ENCODE measurements at regions of chr1 and their contacts with region 1.

Region 1: GRCh38 chr1:30919025-30919881 is 10.7 kb upstream of the SDC3 start:
- DNase-seq: no peak
- ATAC-seq: no peak
- H3K4me3 ChIP-seq: no peak overlapping the region
- H3K27ac ChIP-seq: no peak overlapping the region
- H3K4me1 ChIP-seq: no peaks in the 10 kb centered on the region
- CTCF ChIP-seq: no peak
- EP300 ChIP-seq: no peak
- POLR2A ChIP-seq: no peak
- RAD21 ChIP-seq: no peak

Region 2: DNA sequence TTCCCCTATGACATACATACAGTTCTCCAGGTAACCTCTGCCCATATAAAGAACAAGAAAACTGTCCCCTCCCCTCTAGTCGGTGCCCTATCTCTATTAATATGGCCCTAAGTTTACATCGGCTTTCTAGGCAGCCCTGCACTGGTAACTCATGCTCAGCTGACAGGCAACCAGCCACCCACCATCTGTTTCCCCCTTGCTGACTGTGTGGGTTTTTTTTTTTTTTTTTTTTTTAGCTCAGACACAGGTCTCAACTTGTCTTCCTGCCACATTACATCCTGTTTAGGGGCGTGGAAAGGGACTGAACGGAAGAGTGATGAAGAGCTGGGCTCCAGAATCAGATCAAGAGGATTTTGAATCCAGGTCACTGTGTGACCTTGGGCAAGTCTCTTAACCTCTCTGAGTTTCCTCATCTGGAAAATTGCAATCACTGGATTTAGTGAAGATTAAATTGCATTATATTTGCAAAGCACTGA is 175.6 kb before region 1 on chr1:
- CTCF ChIA-PET with region 1: no interaction called
- POLR2A ChIA-PET with region 1: no interaction called
- DNase-seq: no peak
- ATAC-seq: no peak
- H3K4me3 ChIP-seq: no peak overlapping the region
- H3K27ac ChIP-seq: no peak overlapping the region
- H3K4me1 ChIP-seq: peaks cover 7% of the 10 kb centered on the region; the same call in 2 of the 3 replicates
- CTCF ChIP-seq: no peak
- EP300 ChIP-seq: no peak
- POLR2A ChIP-seq: no peak
- RAD21 ChIP-seq: no peak

Region 3: GRCh38 chr1:30929135-30929889 is 10.1 kb after region 1 on chr1:
- CTCF ChIA-PET with region 1: interaction called, 19 read pairs
- POLR2A ChIA-PET with region 1: no interaction called
- DNase-seq: peak; percentile 37 to 40
- ATAC-seq: peak; percentile 78 to 79
- H3K4me3 ChIP-seq: no peak overlapping the region
- H3K27ac ChIP-seq: no peak overlapping the region
- H3K4me1 ChIP-seq: peaks cover 9% of the 10 kb centered on the region; the same call in 2 of the 3 replicates
- CTCF ChIP-seq: peak; percentile 55
- EP300 ChIP-seq: no peak
- POLR2A ChIP-seq: no peak
- RAD21 ChIP-seq: peak; percentile 51 to 67

Measured in A549 (cell line).